AG04450 (cell line): ENCODE measurements at regions of chr6 and their contacts with region 1.

Region 1: DNA sequence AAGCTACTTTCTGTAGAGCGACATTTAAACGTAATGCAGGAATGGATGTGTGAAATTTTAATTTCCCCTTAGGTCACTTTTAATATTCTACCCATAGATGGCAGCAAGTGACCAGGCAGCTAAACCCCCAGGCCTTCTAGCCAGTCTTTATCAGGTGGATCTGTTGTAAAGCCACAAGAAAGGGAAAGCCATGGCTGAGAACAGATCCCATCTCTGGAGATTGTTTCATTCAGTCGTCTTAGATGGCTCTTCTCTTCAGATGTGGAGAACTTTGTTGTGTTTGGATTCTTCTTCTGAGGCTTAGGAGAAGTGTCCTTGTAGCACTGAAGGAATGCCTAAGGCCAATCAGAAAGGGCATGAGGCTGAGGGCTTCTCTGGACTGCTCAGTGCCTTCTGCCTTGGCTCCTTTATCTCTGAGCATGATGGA is 15.8 kb upstream of the RNF182 start:
- DNase-seq: peak; percentile 45
- H3K4me3 ChIP-seq: no peak overlapping the region
- H3K27ac ChIP-seq: no peak overlapping the region
- H3K27me3 ChIP-seq: peaks cover 5% of the 10 kb centered on the region
- CTCF ChIP-seq: peak; percentile 89

Region 2: DNA sequence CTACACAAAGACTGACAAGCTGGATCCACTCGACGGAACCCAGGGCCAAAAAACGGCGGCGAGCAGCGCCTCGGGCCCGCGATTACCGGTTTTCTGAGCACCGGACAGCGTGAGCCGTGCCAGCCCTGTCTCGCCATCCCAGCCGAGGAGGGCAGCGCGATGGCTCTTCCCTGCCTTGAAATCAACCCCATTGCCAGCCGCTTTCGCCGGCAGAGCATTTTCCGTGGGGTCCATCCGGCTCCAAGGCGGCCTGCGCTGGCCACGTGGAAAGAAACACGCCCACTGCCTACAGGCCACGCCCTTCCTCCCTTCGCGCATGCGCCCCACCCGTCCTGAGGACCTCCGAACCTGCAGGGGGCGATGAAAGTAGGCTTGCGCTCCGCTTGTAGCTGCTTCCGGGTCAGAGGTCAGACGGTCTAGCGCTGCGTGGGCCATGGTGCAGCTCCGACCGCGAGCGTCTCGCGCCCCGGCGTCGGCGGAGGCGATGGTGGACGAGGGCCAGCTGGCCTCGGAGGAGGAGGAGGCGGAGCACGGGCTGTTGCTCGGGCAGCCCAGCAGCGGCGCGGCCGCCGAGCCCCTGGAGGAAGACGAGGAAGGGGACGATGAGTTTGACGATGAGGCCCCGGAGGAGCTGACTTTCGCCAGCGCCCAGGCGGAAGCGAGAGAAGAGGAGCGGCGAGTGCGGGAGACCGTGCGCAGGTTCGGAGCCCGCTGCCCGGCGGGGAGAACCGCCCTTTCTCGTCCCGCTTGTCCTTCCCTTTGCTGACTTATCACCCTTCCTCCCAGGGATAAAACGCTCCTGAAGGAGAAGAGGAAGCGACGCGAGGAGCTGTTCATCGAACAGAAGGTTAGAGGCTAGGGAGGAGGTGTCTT is 293.8 kb before region 1 on chr6 and contains the start of gene NOL7:
- CTCF ChIA-PET with region 1: no interaction called
- POLR2A ChIA-PET with region 1: no interaction called
- DNase-seq: peak; percentile 98
- H3K4me3 ChIP-seq: peak within 1 kb of the TSS; percentile 98
- H3K27ac ChIP-seq: peak within 1 kb of the TSS; percentile 94
- H3K27me3 ChIP-seq: no peaks in the 10 kb centered on the region
- CTCF ChIP-seq: peak; percentile 87
- polyA plus RNA-seq, gene NOL7: 31.3 and 46.6 TPM in 2 replicates

Region 3: DNA sequence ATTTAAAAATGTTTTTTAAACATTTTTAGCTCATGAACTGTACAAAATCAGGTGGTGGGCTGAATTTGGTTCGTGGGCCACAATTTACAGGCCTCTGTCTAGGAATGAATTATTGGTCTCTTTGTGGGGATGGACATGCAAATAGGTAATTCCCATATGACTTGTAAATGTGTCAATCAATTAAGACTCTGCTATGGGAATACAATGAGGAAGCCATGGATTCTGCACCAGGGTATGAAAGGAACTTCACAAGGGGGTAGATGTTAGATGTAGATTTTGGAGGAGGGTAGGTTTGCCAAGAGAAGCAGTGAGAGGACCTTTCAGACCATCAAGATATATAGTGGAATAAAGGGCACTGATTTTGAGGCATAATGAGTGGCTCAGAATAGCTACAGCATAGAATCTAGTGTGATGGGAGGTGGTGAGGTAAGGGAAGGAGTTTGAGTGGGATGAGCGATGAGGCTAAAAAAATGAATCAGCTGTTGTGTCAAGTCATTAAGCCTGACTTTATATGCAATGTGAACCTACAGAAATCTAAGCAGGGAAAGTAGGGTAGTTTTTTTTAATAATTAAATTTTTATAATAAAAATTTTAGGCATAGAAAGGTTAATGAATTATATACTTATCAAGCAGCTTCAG is 16.8 kb before region 1 on chr6:
- CTCF ChIA-PET with region 1: interaction called, 17 read pairs
- POLR2A ChIA-PET with region 1: no interaction called
- DNase-seq: no peak
- H3K4me3 ChIP-seq: no peak overlapping the region
- H3K27ac ChIP-seq: no peak overlapping the region
- H3K27me3 ChIP-seq: peaks cover 14% of the 10 kb centered on the region
- CTCF ChIP-seq: no peak

Region 4: GRCh38 chr6:14037402-14038277 is 128.7 kb after region 1 on chr6:
- CTCF ChIA-PET with region 1: interaction called, 22 read pairs
- POLR2A ChIA-PET with region 1: no interaction called
- DNase-seq: peak; percentile 52
- H3K4me3 ChIP-seq: no peak overlapping the region
- H3K27ac ChIP-seq: peak overlapping the region; percentile 83
- H3K27me3 ChIP-seq: no peaks in the 10 kb centered on the region
- CTCF ChIP-seq: no peak

Region 5: DNA sequence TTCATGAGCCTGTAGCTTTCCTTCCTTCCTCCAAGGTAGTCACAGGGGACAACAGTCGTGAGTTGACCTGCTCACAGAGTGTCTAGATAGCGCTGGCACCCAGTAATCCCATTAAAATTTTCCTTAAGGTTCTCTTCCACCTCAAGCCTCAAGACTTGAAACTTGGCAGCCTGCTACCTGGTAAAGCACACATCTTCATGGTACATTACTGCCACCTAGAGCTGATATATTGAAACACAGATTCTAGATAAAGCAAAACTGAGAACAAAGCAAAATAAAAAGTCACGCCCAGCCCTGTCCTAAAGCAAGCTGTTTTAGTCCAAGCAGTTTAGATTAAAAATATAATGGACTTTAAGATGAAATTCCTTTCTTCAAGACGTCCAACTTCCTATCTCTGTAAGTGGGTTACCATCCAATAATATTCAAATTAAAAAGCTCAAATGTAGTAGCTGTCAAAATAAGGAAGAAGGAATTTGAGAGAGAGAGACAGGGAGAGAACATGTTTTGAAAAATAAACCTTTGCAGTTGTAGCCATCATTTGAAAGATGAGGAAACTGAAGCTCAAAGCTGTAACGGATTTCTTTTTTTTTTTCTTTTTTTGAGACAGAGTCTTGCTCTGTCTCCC is 157.9 kb after region 1 on chr6:
- CTCF ChIA-PET with region 1: interaction called, 501 read pairs
- POLR2A ChIA-PET with region 1: no interaction called
- DNase-seq: peak; percentile 55
- H3K4me3 ChIP-seq: no peak overlapping the region
- H3K27ac ChIP-seq: no peak overlapping the region
- H3K27me3 ChIP-seq: no peaks in the 10 kb centered on the region
- CTCF ChIP-seq: peak; percentile 64

Region 6: GRCh38 chr6:14144678-14145113 is 235.7 kb after region 1 on chr6:
- CTCF ChIA-PET with region 1: interaction called, 68 read pairs
- POLR2A ChIA-PET with region 1: no interaction called
- DNase-seq: peak; percentile 27
- H3K4me3 ChIP-seq: no peak overlapping the region
- H3K27ac ChIP-seq: no peak overlapping the region
- H3K27me3 ChIP-seq: peaks cover 25% of the 10 kb centered on the region
- CTCF ChIP-seq: peak; percentile 91